ENCODE measurements at regions of chr3 and their contacts with region 1.

Region 1: GRCh38 chr3:172181932-172182586 is 142.7 kb downstream of the FNDC3B start:
- DNase-seq: no peak
- ATAC-seq: peak; percentile 50
- H3K4me3 ChIP-seq: no peak overlapping the region
- H3K27ac ChIP-seq: peak overlapping the region; percentile 9
- H3K4me1 ChIP-seq: peaks cover 41% of the 10 kb centered on the region
- H3K27me3 ChIP-seq: no peaks in the 10 kb centered on the region
- CTCF ChIP-seq: no peak
- EP300 ChIP-seq: no peak
- POLR2A ChIP-seq: no peak
- RAD21 ChIP-seq: no peak

Region 2: DNA sequence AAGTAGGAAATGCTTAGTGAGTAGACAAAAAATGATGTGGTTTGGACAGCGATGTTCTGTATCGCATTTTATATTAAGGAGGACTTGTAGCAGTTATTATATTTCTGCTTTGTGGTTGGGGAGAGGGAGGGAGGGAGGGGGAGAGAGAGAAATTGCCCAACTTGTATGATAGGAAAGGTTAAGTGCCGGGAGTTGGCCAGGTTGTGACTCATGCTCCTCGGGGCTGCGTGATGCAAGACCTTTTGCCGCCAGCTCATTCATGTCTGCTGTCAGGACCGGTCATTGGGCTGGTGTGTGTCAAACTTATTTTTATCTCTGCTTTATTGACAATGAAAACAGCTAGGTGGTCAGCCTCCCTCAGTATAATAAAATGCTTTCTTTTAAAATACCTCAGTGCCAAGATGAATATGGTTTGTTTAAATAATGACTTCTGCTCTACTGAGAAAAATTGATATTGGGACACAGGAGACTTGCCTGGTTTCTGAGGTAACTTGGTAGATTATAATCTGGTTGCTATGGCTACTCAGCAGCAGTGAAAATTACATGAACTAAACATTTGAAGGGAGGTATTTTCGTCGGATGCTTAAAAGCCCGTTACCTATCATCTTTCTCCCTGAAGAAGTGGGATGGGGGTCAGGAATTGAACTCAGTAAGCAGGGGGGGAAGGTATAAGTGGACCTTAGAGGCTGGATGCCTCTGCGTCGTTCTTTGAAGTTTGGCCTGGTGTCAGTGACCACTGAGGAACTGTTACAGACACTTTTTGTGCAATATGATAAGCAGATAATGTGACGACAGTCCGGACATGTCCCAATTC is 52.0 kb before region 1 on chr3:
- CTCF ChIA-PET with region 1: interaction called, 6 read pairs
- POLR2A ChIA-PET with region 1: interaction called, 7 read pairs
- RAD21 ChIA-PET with region 1: interaction called, 7 read pairs
- SMC1A ChIA-PET with region 1: interaction called, 441 read pairs
- in situ Hi-C with region 1: no loop called
- intact Hi-C with region 1: no loop called
- DNase-seq: no peak
- ATAC-seq: peak; percentile 12; the same call in 1 of the 3 replicates
- H3K4me3 ChIP-seq: no peak overlapping the region
- H3K27ac ChIP-seq: no peak overlapping the region
- H3K4me1 ChIP-seq: peaks cover 29% of the 10 kb centered on the region
- H3K27me3 ChIP-seq: no peaks in the 10 kb centered on the region
- CTCF ChIP-seq: no peak
- EP300 ChIP-seq: no peak
- POLR2A ChIP-seq: no peak
- RAD21 ChIP-seq: no peak

Region 3: DNA sequence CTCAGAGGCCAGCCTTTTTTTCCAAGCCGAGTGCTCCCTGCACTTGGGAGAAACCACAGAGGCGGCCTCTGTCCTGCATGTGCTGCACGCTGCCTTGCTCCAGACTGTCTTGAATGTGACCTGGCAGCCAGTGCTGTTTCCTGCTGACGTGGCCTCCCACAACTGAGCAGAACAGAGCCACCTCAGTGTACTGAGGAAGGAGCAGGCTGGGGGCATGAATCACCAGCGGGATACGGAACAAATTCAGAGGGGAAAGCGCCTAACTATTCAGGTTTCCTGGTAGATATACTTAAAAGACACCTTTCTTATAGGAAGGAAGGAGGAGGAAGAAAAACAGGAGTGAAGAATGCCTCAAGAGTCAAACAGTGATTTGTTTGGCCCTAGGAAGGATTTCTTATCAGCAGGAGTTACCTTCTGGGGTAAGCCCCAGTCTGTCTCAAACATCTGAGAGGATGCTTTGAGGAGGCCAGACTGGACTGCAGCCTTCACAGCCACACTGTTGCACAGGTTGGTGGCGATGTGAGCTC is 28.7 kb before region 1 on chr3:
- CTCF ChIA-PET with region 1: interaction called, 4 read pairs
- POLR2A ChIA-PET with region 1: interaction called, 10 read pairs
- RAD21 ChIA-PET with region 1: interaction called, 13 read pairs
- SMC1A ChIA-PET with region 1: interaction called, 441 read pairs
- in situ Hi-C with region 1: no loop called
- intact Hi-C with region 1: no loop called
- DNase-seq: no peak
- ATAC-seq: peak; percentile 72
- H3K4me3 ChIP-seq: peak overlapping the region; percentile 22; the same call in 1 of the 2 replicates
- H3K27ac ChIP-seq: peak overlapping the region; percentile 78
- H3K4me1 ChIP-seq: peaks cover 25% of the 10 kb centered on the region
- H3K27me3 ChIP-seq: no peaks in the 10 kb centered on the region
- CTCF ChIP-seq: no peak
- EP300 ChIP-seq: no peak
- POLR2A ChIP-seq: no peak; the same call in 1 of the 2 replicates
- RAD21 ChIP-seq: no peak

Region 4: DNA sequence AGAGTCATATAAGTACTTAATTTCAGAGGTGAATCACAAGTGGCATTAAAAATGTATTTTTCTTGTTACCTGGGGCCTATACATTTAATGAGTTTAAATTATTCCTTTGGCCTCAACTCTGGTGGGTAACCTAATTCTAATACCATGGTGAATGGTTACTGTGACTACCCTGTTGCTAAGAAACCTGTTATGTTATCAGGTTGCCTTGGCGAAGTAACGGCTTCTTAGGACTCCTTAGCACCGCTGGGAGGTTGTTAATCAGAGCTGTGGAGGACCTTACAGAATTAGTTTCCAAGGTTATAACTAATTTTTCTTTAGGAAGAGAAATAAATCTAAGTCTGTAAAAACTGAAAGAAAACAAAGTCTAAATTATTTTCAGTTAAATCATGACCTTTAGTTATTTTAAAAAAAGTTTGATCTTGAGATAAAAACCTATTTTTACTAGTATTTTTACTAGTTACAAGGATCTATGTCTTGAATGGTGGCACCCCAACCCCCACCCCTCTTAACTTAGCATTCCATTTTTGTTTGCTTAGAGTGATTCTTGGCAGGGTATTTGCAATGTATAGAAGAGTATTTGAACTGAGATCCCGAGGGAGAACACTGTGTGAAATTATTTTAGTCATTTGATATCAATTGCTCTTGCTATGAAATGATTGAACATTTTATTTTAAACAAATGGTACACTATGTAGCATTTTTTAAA is 12.8 kb after region 1 on chr3:
- CTCF ChIA-PET with region 1: interaction called, 8 read pairs
- POLR2A ChIA-PET with region 1: interaction called, 3 read pairs
- RAD21 ChIA-PET with region 1: interaction called, 6 read pairs
- SMC1A ChIA-PET with region 1: interaction called, 12 read pairs
- in situ Hi-C with region 1: no loop called
- intact Hi-C with region 1: no loop called
- DNase-seq: no peak
- ATAC-seq: peak; percentile 75
- H3K4me3 ChIP-seq: no peak overlapping the region
- H3K27ac ChIP-seq: no peak overlapping the region
- H3K4me1 ChIP-seq: no peaks in the 10 kb centered on the region
- H3K27me3 ChIP-seq: no peaks in the 10 kb centered on the region
- CTCF ChIP-seq: no peak
- EP300 ChIP-seq: no peak
- POLR2A ChIP-seq: no peak
- RAD21 ChIP-seq: no peak

Region 5: DNA sequence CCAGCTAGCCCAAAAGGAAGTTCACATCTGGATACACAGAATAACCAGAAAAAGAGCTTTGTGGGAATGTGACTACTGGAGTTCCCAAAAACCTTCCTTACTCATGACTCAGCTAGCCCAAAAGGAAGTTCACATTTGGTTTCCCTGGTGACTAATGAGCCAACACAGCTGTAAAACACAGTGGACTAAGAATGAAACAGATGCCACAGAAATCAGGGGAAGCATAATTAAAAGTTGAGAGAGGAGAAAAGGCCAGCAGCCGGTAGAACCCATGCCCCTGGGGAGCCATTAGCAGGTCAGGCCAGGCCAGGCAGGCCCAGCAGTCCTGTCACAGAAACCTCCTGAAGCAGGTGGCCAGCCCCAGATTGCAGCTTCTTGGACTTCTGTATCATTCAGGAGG is 135.9 kb after region 1 on chr3:
- CTCF ChIA-PET with region 1: no interaction called
- POLR2A ChIA-PET with region 1: no interaction called
- RAD21 ChIA-PET with region 1: no interaction called
- SMC1A ChIA-PET with region 1: no interaction called
- in situ Hi-C with region 1: no loop called
- intact Hi-C with region 1: loop called (anchors 5 kb)
- DNase-seq: peak; percentile 74
- ATAC-seq: peak; percentile 84
- H3K4me3 ChIP-seq: no peak overlapping the region
- H3K27ac ChIP-seq: peak overlapping the region; percentile 48
- H3K4me1 ChIP-seq: peaks cover 10% of the 10 kb centered on the region
- H3K27me3 ChIP-seq: no peaks in the 10 kb centered on the region
- CTCF ChIP-seq: no peak
- EP300 ChIP-seq: peak; percentile 51 to 71
- POLR2A ChIP-seq: no peak
- RAD21 ChIP-seq: no peak